WTC11 (cell line): ENCODE measurements at regions of chr10 and their contacts with region 1.

Region 1: GRCh38 chr10:123994417-123995081 is 98.8 kb downstream of the CHST15 start:
- DNase-seq: peak; percentile 97
- ATAC-seq: peak; percentile 68
- H3K4me3 Mint-ChIP-seq: peak overlapping the region; percentile 70
- H3K27ac Mint-ChIP-seq: no peak overlapping the region
- H3K4me1 Mint-ChIP-seq: peaks cover 20% of the 10 kb centered on the region
- H3K27me3 Mint-ChIP-seq: peaks cover 47% of the 10 kb centered on the region
- CTCF ChIP-seq: peak; percentile 100

Region 2: GRCh38 chr10:123942114-123942807 is 52.3 kb before region 1 on chr10:
- CTCF ChIA-PET with region 1: no interaction called
- POLR2A ChIA-PET with region 1: no interaction called
- DNase-seq: no peak
- ATAC-seq: no peak
- H3K4me3 Mint-ChIP-seq: no peak overlapping the region
- H3K27ac Mint-ChIP-seq: no peak overlapping the region
- H3K4me1 Mint-ChIP-seq: peaks cover 14% of the 10 kb centered on the region
- H3K27me3 Mint-ChIP-seq: no peaks in the 10 kb centered on the region
- CTCF ChIP-seq: no peak

Region 3: GRCh38 chr10:124025660-124026588 is 31.4 kb after region 1 on chr10:
- CTCF ChIA-PET with region 1: interaction called, 13 read pairs
- POLR2A ChIA-PET with region 1: no interaction called
- DNase-seq: no peak
- ATAC-seq: no peak
- H3K4me3 Mint-ChIP-seq: no peak overlapping the region
- H3K27ac Mint-ChIP-seq: no peak overlapping the region
- H3K4me1 Mint-ChIP-seq: peaks cover 56% of the 10 kb centered on the region
- H3K27me3 Mint-ChIP-seq: no peaks in the 10 kb centered on the region
- CTCF ChIP-seq: no peak

Region 4: GRCh38 chr10:124125447-124126116 is 131.0 kb after region 1 on chr10:
- CTCF ChIA-PET with region 1: interaction called, 21 read pairs
- POLR2A ChIA-PET with region 1: no interaction called
- DNase-seq: peak; percentile 35
- ATAC-seq: peak; percentile 68
- H3K4me3 Mint-ChIP-seq: no peak overlapping the region
- H3K27ac Mint-ChIP-seq: no peak overlapping the region
- H3K4me1 Mint-ChIP-seq: peaks cover 3% of the 10 kb centered on the region; the same call in 1 of the 2 replicates
- H3K27me3 Mint-ChIP-seq: peaks cover 6% of the 10 kb centered on the region
- CTCF ChIP-seq: peak; percentile 19; the same call in 1 of the 2 replicates

Region 5: DNA sequence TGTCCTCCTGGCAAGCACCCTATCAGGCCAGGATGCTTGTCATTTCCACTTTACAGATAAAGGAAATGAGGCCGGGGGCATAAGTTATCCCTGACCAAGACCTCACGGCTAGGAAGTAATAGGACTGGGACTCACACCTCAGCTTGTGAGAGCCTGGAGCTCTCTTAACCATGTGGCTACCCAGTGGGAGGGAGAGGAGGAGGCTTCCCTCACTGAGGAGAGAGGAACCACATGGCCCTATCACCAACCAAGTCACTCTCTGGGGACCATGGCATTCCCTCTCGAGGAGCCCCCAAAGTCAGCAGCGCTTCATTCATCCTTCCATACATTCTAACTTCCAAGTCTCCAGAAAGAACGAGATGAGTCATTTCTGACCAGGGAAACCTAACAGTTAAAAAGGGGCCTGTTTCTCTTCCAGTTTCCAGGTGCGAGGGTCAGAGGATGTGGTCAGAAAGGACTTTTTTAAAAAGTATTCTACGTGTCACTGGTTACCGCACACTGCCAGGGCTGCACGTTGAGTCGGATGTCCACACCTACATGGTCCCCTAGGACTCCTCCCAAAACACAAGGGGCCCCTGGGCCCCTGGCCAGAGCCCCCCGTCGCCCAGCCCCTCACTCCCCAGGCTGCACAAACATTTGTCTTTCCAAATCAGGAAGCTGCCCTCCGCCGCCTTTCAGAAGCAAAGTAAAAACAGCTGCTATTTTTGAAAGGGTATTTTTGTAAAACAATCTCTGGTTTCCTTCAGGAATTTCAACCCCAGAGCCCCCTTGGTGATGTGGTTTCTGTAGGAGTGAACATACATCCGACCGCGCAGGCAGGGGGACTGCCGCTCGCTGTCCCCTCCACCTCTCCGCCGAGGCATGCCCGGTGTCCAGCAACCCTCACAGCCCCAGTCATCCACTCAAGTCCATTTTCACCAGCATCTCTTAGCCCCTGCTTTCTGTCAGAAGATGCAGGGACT is 227.1 kb after region 1 on chr10:
- CTCF ChIA-PET with region 1: interaction called, 22 read pairs
- POLR2A ChIA-PET with region 1: no interaction called
- DNase-seq: no peak
- ATAC-seq: no peak
- H3K4me3 Mint-ChIP-seq: no peak overlapping the region
- H3K27ac Mint-ChIP-seq: no peak overlapping the region
- H3K4me1 Mint-ChIP-seq: peaks cover 13% of the 10 kb centered on the region
- H3K27me3 Mint-ChIP-seq: no peaks in the 10 kb centered on the region; the same call in 1 of the 2 replicates
- CTCF ChIP-seq: no peak

Region 6: DNA sequence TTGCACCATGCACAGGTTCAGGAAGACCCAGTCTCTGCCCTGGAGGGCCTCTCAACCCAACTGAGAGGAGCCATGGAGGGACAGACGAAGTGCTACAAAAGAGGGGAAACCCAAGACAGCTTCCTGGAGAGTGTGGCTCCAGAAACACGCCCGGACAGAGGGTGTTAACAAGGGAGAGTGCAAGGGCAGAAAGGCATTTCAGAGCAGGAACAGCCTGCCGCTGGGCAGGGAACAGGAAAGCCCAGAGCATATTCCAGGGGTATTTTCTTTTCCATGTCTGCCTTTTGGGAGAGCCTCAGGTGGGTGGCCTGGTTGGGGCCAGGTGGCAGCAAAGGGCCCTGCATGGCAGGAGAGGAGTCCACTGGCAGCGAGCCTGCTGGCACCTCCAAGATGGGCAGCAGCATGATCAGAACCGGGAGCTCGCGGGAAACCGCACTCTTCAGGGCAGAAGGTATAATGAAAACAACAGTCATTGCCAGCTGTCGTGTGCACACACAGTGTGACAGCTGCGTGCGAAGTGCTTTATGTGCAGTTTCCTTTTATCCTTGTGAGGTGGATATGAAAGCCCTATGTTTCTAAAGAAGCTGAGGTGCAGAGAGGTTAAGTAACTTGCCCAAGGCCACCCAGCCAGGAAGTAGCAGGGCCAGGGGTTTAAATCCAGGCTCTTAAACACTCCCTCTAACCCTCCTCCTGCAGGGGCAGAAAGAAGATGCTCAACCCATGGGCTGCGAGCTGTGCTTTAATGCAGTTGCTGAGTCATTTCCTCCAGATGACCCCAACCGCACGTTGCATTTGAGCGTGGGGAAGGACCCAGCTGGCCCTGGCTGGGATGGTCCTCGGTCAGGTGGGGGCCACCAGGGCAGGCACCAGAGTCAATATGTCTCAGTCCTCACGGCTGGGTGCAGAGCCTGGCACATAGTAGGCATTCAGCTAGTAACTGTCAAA is 295.6 kb after region 1 on chr10:
- CTCF ChIA-PET with region 1: interaction called, 27 read pairs
- POLR2A ChIA-PET with region 1: no interaction called
- DNase-seq: peak; percentile 7
- ATAC-seq: no peak
- H3K4me3 Mint-ChIP-seq: no peak overlapping the region
- H3K27ac Mint-ChIP-seq: no peak overlapping the region
- H3K4me1 Mint-ChIP-seq: no peaks in the 10 kb centered on the region
- H3K27me3 Mint-ChIP-seq: no peaks in the 10 kb centered on the region
- CTCF ChIP-seq: no peak

Region 7: DNA sequence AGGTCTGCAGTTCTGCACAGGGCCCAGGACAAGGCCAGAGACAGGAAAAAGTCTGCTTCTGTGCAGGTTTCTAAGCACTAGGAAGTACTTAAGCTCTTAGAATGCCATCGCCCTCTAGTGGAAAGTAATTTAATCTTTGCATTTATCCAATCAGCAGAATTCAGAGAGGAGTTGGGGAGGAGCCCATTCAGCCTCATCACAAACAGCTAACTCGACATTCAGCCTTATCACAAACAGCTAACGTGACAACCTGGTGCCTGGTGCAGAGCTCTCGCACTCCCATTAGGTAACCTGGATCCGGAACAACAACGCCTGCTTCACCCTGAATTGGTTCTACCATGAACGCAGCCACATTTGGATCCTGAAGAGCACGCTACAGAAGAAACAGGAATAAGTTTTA is 409.0 kb after region 1 on chr10:
- CTCF ChIA-PET with region 1: interaction called, 28 read pairs
- POLR2A ChIA-PET with region 1: no interaction called
- DNase-seq: peak; percentile 30
- ATAC-seq: peak; percentile 98
- H3K4me3 Mint-ChIP-seq: no peak overlapping the region
- H3K27ac Mint-ChIP-seq: peak overlapping the region; percentile 95
- H3K4me1 Mint-ChIP-seq: peaks cover 9% of the 10 kb centered on the region
- H3K27me3 Mint-ChIP-seq: no peaks in the 10 kb centered on the region
- CTCF ChIP-seq: no peak